Aorta (tissue), 5 donors: ENCODE measurements at regions of chr18 and their contacts with region 1.

Region 1: DNA sequence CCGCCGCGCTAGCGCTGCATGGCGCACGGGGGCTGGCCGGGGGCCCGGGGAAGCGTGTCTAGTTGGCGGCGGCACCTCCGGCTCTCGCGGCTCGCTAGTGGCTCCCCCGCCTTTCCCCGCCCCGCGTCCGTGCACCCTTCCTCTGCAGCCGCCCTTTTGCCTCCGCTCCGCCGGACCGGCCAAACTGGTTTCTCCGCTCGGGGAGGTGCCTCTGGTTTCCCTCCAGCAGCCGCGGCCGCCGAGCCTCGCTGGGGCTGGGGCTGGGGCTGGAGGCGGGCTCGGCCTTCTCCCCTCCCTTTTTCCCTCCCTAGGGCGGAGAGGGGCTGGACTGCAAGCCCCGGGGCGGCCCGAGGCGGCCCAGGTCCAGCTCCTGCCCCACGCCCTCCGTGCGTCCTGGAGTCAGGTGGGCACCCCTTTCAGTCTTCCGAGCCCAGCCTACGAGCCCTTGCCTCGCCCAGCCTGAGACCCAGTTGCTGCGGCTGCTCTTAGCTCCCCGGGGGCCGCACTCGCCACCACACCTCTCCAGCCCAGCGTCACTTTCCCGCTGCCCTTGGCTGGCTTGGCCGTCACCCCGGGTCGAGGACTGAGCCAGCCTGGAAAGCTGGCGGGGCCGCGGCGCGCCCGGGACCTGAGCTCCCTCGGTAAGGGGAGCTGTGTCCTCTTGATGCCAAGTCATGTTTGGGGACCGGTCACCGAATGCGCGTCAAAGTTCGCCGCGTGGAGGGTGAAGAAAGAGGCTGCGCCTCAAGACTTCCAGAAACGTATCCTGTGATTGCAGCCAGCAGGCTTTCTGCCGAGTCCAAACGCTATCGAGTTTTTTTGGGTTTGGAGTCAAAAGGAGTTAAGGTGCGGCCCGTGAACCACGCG is at the start of gene ATP8B1:
- DNase-seq: peak; percentile 90 to 93
- ATAC-seq: peak; percentile 91
- H3K4me3 ChIP-seq: peak within 1 kb of the TSS; percentile 57 to 83
- H3K27ac ChIP-seq: peak within 1 kb of the TSS; percentile 81 to 85
- H3K4me1 ChIP-seq: no peaks in the 10 kb centered on the region
- H3K27me3 ChIP-seq: no peaks in the 10 kb centered on the region
- total RNA-seq, gene ATP8B1: 76.5 to 101 TPM

Region 2: DNA sequence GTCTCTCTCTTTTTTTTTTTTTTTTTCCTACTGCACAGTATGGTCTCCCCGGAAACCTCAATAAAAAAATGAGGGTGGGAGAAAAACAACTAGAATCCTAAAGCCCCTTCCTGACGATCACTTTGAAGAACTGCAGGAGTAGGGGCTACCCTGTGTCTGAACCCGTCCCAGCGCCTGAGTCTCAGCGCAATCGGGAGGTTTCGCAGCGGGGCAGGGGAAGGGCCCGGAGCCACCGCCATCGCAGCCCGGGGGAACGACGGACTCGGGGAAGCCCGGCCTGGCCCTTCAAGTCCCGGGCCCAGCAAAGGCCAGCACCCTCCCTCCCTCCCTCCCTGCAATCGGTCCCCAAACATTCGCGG is 182.1 kb before region 1 on chr18:
- intact Hi-C with region 1: loop called in 1 of 2 experiments (anchors 5 kb)
- DNase-seq: no peak
- ATAC-seq: peak; percentile 38
- H3K4me3 ChIP-seq: peak overlapping the region; percentile 88 to 90
- H3K27ac ChIP-seq: peak overlapping the region in 1 of 2 donors; percentile 82
- H3K4me1 ChIP-seq: no peaks in the 10 kb centered on the region
- H3K27me3 ChIP-seq: no peaks in the 10 kb centered on the region

Region 3: DNA sequence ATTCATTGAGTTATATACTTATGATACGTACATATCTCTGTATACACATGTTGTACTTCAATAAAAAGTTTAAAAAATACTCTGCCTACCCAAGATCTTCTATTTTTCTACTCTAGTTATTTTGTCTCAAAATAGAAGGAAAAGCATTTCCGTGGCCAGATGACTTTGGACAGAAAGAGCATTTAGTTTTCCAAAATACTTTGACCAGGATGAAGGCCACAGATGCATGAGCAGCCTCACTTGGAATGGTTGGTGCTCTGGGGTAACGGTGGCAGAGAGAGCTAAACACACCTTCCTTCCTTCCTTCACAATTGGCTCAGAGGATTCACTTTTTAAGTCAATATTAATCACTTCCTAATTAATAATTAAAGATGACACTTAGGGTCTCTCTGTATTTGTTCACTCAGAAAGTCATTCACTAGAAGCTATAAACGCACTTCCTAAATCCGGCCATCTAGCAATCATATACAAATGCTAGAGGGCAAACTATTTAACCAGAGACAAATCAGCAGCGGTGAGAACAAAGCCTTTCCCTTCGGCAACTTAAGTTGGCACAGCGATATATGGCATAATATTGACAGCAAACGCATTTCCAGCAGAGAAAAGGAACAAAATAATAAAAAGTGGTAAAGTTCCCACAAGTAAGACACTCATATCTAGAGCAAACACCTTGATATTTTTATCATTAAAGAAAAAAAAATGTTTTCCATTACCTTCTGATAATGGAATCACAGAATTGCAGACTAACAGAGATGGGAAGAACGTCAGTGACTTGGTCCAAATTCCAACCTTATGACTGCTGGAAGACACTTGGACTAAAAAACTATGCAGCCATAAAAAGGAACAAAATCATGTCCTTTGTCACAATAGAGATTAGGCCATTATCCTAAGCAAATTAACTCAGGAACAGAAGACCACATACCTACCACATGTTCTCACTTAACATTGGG is 125.8 kb before region 1 on chr18:
- intact Hi-C with region 1: loop called in 1 of 2 experiments (anchors 5 kb)
- DNase-seq: no peak
- ATAC-seq: peak; percentile 62
- H3K4me3 ChIP-seq: no peak overlapping the region
- H3K27ac ChIP-seq: peak overlapping the region; percentile 61 to 71
- H3K4me1 ChIP-seq: peaks cover 2 to 10% of the 10 kb centered on the region in 2 donors
- H3K27me3 ChIP-seq: no peaks in the 10 kb centered on the region

Region 4: DNA sequence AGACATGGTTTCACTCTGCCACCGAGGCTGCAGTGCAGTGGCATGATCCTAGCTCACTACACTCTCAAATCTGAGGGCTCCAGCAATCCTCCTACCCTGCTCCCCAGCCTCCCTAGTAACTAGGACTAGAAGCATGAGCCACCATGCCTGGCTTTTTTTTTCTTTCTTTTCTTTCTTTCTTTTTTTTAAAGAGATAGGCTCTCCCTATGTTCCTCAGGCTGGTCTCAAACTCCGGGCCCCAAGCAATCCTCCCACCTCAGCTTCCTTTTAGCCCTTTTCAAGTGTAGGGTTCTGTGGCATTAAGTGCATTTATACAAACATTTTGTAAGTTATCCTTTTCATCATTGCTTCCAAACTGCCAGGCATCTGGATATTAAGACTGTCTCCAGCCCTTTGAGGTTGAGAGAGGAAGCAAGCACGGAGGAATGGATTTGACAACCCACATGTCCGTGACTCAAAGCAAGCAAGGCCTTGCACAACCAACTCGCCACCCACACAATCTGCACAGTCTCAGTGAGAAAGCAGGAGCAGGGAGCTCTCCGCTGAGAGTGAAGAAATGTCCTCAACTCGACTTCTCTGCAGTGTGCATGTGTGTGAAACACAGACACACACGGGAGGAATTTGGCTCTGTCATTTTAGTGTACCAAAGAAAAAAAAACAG is 65.8 kb before region 1 on chr18:
- intact Hi-C with region 1: loop called in 1 of 2 experiments (anchors 5 kb)
- DNase-seq: peak; percentile 89
- ATAC-seq: peak; percentile 87
- H3K4me3 ChIP-seq: no peak overlapping the region
- H3K27ac ChIP-seq: peak overlapping the region in 1 of 2 donors; percentile 43
- H3K4me1 ChIP-seq: peaks cover 3% of the 10 kb centered on the region in 2 donors
- H3K27me3 ChIP-seq: no peaks in the 10 kb centered on the region

Region 5: GRCh38 chr18:57768537-57769326 is 34.6 kb before region 1 on chr18:
- intact Hi-C with region 1: loop called in 1 of 2 experiments (anchors 5 kb)
- DNase-seq: no peak
- ATAC-seq: peak; percentile 75
- H3K4me3 ChIP-seq: no peak overlapping the region
- H3K27ac ChIP-seq: peak overlapping the region; percentile 38 to 47
- H3K4me1 ChIP-seq: peaks cover under 1 to 6% of the 10 kb centered on the region in 2 donors
- H3K27me3 ChIP-seq: no peaks in the 10 kb centered on the region

Region 6: GRCh38 chr18:57915865-57916582 is 112.7 kb after region 1 on chr18:
- intact Hi-C with region 1: no loop called
- DNase-seq: no peak
- ATAC-seq: no peak
- H3K4me3 ChIP-seq: no peak overlapping the region
- H3K27ac ChIP-seq: no peak overlapping the region
- H3K4me1 ChIP-seq: no peaks in the 10 kb centered on the region
- H3K27me3 ChIP-seq: no peaks in the 10 kb centered on the region